ENCODE measurements at regions of chr3 and their contacts with region 1.

Region 1: GRCh38 chr3:46334741-46335478 is 19.0 kb upstream of the CCR2 start:
- DNase-seq: peak; percentile 40
- H3K4me3 Mint-ChIP-seq: no peak overlapping the region
- H3K27ac Mint-ChIP-seq: peak overlapping the region; percentile 28
- H3K4me1 Mint-ChIP-seq: peaks cover 12% of the 10 kb centered on the region
- H3K27me3 Mint-ChIP-seq: peaks cover 20% of the 10 kb centered on the region
- CTCF ChIP-seq: no peak

Region 2: DNA sequence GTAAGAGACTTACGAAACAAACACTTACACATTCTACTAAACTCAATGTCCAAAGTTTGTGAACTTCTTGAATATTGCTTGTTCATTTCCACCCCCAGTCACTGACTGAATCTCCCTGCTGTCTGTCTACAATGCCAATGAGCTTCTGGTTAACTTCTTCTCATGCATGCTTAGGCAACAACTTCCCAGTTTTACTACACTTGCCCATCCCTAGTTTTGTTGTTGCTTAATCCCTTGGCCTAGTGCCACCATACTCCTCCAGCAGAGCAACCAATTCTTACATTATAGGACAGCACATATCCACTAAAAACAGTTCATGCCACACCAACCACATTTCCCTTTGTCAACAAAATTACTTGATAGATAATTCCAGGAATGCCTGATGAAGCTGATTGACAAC is 21.9 kb before region 1 on chr3:
- CTCF ChIA-PET with region 1: no interaction called
- POLR2A ChIA-PET with region 1: interaction called, 19 read pairs
- intact Hi-C with region 1: no loop called
- DNase-seq: peak; percentile 96
- H3K4me3 Mint-ChIP-seq: no peak overlapping the region
- H3K27ac Mint-ChIP-seq: peak overlapping the region; percentile 74
- H3K4me1 Mint-ChIP-seq: peaks cover 19% of the 10 kb centered on the region
- H3K27me3 Mint-ChIP-seq: peaks cover 13% of the 10 kb centered on the region
- CTCF ChIP-seq: no peak

Measured in MCF 10A (cell line).